Caki2 (cell line): ENCODE measurements at regions of chr12 and their contacts with region 1.

Region 1: GRCh38 chr12:43766291-43766690 is 7.5 kb downstream of the IRAK4 start:
- DNase-seq: no peak

Region 2: GRCh38 chr12:43621262-43621661 is 145.0 kb before region 1 on chr12:
- in situ Hi-C with region 1: no loop called
- DNase-seq: no peak

Region 3: DNA sequence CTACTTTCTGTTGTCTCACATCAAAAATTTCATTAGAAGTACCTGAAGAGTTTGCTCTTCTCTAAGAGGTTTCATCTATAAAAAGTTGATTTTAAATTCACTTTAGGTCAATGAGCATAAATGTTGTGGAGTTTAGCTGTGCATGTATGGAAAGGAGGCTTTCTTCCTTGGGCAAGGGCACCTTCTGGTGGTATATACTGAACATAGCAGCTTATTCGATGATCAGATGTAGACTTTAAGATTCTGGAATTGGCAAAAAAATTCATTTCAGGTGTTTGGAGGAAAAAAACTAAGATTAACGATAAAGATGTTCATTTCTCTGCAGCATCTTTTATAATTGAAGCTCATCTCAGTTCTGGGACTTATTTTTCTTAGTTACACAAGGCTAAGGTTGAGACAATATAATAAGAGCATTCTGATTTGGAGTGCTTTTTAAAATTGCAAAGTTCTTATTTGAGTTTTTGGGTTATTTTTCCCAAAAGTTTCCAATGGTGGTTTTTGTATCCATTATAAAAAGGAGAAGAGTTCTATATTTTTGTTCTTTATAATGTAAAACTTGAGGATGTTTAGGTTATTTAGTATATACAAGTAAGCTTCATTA is 116.4 kb after region 1 on chr12:
- in situ Hi-C with region 1: loop called (anchors 10 kb)
- DNase-seq: peak; percentile 33